Activated B cell treated with CpG ODN at 0.5 μM for 24 hours (primary cell): ENCODE measurements at regions of chr17 and their contacts with region 1.

Region 1: DNA sequence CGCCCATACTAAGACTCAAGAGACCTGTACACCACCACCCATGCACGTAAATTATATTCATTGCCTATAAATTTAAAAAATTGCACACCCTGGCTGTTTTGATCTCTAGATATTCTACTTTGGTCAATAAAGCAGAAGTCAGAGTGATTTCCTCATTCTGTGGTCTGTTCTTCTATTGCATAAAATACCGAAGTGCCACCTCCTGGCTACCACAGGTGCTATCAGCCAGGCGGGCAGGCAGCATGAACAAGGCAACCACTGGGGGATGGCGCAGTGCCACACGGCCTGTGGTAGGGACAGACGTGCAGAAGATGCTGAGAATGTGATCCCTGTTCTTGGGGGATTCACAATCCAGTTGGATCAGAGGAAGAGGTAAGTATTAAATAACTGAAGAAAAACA is 122.3 kb downstream of the CDK5R1 start:
- DNase-seq: peak; percentile 52
- ATAC-seq: peak; percentile 100
- H3K4me3 Mint-ChIP-seq: no peak overlapping the region
- H3K27ac Mint-ChIP-seq: no peak overlapping the region
- H3K4me1 Mint-ChIP-seq: peaks cover 8% of the 10 kb centered on the region
- H3K27me3 Mint-ChIP-seq: no peaks in the 10 kb centered on the region
- CTCF ChIP-seq: no peak

Region 2: DNA sequence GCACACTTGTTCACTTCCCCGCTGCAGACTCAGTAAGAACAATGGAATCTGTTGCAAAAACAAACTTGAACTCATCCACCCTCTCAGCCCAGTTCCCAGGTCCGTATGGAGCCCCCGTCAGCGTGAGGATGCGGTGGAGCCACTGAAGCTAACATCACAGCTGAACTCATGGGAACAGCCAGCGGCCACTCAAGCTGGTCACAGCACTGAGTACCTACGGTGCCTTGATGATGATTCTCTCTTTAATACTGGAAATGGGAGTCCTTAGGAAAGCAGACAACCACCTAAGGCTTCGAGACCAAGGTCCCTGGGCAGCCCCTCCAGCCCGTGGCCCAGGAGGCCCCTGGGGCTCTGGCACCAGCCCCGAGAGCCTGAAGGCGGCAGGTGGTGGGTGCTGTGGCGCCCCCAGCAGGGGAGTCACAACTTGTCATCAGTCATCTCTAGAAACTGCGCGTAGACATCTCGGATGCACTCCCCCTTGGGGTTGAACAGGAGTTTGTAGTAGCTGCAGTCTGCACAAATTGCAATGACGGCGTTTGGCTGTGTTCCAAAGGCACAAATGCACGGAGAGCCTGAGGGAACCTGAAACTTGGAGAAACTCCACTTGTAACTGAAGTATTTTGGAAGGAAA is 497.8 kb before region 1 on chr17:
- CTCF ChIA-PET with region 1: no interaction called
- POLR2A ChIA-PET with region 1: no interaction called
- intact Hi-C with region 1: no loop called
- DNase-seq: no peak
- ATAC-seq: no peak
- H3K4me3 Mint-ChIP-seq: no peak overlapping the region
- H3K27ac Mint-ChIP-seq: no peak overlapping the region
- H3K4me1 Mint-ChIP-seq: peaks cover 5% of the 10 kb centered on the region
- H3K27me3 Mint-ChIP-seq: peaks cover 2% of the 10 kb centered on the region
- CTCF ChIP-seq: no peak

Region 3: GRCh38 chr17:32558997-32559650 is 50.0 kb before region 1 on chr17:
- CTCF ChIA-PET with region 1: interaction called, 3 read pairs
- POLR2A ChIA-PET with region 1: interaction called, 3 read pairs
- intact Hi-C with region 1: loop called (anchors 5 kb)
- DNase-seq: no peak
- ATAC-seq: peak; percentile 64
- H3K4me3 Mint-ChIP-seq: peak overlapping the region; percentile 48
- H3K27ac Mint-ChIP-seq: peak overlapping the region; percentile 86
- H3K4me1 Mint-ChIP-seq: peaks cover 38% of the 10 kb centered on the region
- H3K27me3 Mint-ChIP-seq: no peaks in the 10 kb centered on the region
- CTCF ChIP-seq: no peak

Region 4: GRCh38 chr17:32569171-32570080 is 39.7 kb before region 1 on chr17:
- CTCF ChIA-PET with region 1: no interaction called
- POLR2A ChIA-PET with region 1: no interaction called
- intact Hi-C with region 1: loop called (anchors 5 kb)
- DNase-seq: no peak
- ATAC-seq: no peak
- H3K4me3 Mint-ChIP-seq: peak overlapping the region; percentile 17
- H3K27ac Mint-ChIP-seq: peak overlapping the region; percentile 5
- H3K4me1 Mint-ChIP-seq: peaks cover 18% of the 10 kb centered on the region
- H3K27me3 Mint-ChIP-seq: no peaks in the 10 kb centered on the region
- CTCF ChIP-seq: no peak

Region 5: DNA sequence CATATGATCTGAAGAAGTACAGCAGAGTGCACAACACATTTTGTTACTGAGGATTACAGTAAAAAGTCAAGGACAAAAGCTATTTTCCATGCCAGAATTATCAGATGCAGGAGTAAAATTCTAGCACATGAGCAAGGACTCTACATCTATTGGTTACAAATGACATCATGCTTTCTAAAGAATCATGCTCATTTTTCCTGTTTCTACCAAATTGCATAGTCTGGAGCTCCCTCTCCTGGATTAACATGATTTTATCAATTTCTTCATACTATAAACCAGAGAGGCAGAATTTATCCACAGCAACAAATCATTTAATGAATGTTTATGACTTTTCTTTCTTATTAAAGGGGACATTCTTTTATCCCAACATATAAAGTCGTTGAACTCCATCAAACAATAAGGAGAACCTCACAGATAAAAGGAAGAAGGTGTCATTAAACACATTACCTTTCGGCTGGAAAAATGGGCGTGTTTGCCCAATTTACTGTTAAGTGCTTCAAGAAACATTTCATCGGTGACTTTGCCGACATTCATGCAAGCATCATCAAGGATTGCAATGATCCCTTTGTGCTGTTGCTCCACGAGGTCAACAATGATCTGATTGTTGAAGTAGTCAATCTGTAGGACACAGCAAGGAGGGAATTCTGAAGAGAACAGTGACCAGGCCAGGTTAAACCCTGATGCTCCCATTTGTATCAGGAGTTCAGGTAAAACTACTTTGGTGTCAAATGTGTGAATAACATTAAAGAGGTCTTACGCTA is 146.1 kb after region 1 on chr17:
- CTCF ChIA-PET with region 1: interaction called, 3 read pairs
- POLR2A ChIA-PET with region 1: no interaction called
- intact Hi-C with region 1: loop called (anchors 1 kb)
- DNase-seq: no peak
- ATAC-seq: peak; percentile 69
- H3K4me3 Mint-ChIP-seq: no peak overlapping the region
- H3K27ac Mint-ChIP-seq: no peak overlapping the region
- H3K4me1 Mint-ChIP-seq: no peaks in the 10 kb centered on the region
- H3K27me3 Mint-ChIP-seq: no peaks in the 10 kb centered on the region
- CTCF ChIP-seq: no peak